ENCODE measurements at regions of chr13 and their contacts with region 1.

Region 1: GRCh38 chr13:43804461-43805070 is 17.8 kb upstream of the ENOX1 start:
- DNase-seq: peak; percentile 59
- ATAC-seq: no peak
- H3K4me3 ChIP-seq: no peak overlapping the region
- H3K4me3 Mint-ChIP-seq: no peak overlapping the region
- H3K27ac ChIP-seq: no peak overlapping the region
- H3K27ac Mint-ChIP-seq: no peak overlapping the region
- H3K4me1 ChIP-seq: no peaks in the 10 kb centered on the region
- H3K4me1 Mint-ChIP-seq: no peaks in the 10 kb centered on the region
- H3K27me3 ChIP-seq: no peaks in the 10 kb centered on the region
- H3K27me3 Mint-ChIP-seq: peaks cover 13% of the 10 kb centered on the region
- CTCF ChIP-seq: peak; percentile 85

Region 2: DNA sequence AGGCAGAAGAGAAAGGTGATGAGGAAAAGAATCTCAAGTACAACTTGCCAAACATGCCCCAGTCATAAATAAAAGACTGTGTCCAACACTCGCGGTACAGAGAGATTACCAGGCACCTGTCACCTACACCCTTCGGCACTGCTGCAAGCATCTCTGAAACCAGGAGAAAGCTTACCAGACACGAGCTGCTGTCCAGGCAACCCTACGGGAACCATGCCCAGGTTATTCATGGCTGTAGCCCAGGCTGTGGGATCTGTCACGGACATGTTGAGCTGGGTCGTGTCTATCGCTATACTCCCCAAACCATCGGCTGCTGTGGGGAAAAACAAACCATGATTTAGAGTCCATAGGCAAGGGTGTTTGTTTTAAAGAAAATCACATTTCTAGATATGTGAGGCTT is 392.8 kb before region 1 on chr13:
- CTCF ChIA-PET with region 1: no interaction called
- POLR2A ChIA-PET with region 1: no interaction called
- intact Hi-C with region 1: no loop called
- DNase-seq: no peak
- ATAC-seq: no peak
- H3K4me3 ChIP-seq: no peak overlapping the region
- H3K4me3 Mint-ChIP-seq: no peak overlapping the region
- H3K27ac ChIP-seq: no peak overlapping the region
- H3K27ac Mint-ChIP-seq: no peak overlapping the region
- H3K4me1 ChIP-seq: no peaks in the 10 kb centered on the region
- H3K4me1 Mint-ChIP-seq: no peaks in the 10 kb centered on the region
- H3K27me3 ChIP-seq: peaks cover 0 to 4% (median 0%) of the 10 kb centered on the region in 4 experiments
- H3K27me3 Mint-ChIP-seq: peaks cover 11% of the 10 kb centered on the region
- CTCF ChIP-seq: no peak

Region 3: DNA sequence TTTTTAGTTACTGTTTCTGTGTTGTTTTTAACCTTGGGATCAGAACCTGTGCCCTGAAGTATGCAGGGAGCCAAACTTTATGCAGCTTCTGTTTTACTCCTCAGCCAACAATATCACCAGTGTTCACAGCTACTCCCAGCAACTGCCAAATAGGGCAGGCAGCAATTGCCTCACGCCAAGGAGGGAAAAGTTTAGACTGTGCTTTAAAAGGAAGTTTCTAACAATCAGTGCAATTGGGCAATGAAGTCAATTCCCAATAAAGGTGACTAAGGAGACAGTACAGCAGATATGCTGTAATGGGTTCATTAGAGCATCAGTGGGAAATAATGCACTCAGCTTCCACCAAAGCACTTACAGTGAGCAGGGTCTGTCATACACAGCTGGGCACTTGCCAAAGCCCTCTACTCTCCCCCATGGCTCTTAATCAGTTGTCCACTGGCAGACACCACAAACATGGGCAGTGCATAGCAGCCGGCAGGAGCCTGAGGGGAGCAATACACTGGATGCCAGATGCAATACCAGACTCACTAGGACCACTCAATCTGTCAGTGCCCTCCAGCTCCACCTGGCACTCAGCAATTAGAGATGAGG is 37.1 kb before region 1 on chr13:
- CTCF ChIA-PET with region 1: no interaction called
- POLR2A ChIA-PET with region 1: no interaction called
- intact Hi-C with region 1: no loop called
- DNase-seq: no peak
- ATAC-seq: no peak
- H3K4me3 ChIP-seq: no peak overlapping the region
- H3K4me3 Mint-ChIP-seq: no peak overlapping the region
- H3K27ac ChIP-seq: no peak overlapping the region
- H3K27ac Mint-ChIP-seq: no peak overlapping the region
- H3K4me1 ChIP-seq: no peaks in the 10 kb centered on the region
- H3K4me1 Mint-ChIP-seq: no peaks in the 10 kb centered on the region
- H3K27me3 ChIP-seq: no peaks in the 10 kb centered on the region
- H3K27me3 Mint-ChIP-seq: peaks cover 8% of the 10 kb centered on the region
- CTCF ChIP-seq: no peak

Region 4: GRCh38 chr13:43786773-43787517 is 17.6 kb before region 1 on chr13 and contains the start of gene ENOX1:
- CTCF ChIA-PET with region 1: interaction called, 13 read pairs
- POLR2A ChIA-PET with region 1: no interaction called
- intact Hi-C with region 1: no loop called
- DNase-seq: peak; percentile 37
- ATAC-seq: no peak
- H3K4me3 ChIP-seq: peak within 1 kb of the TSS in 3 of 5 experiments; percentile 43 to 56 (median 46)
- H3K4me3 Mint-ChIP-seq: peak within 1 kb of the TSS; percentile 82
- H3K27ac ChIP-seq: no peak within 1 kb of the TSS
- H3K27ac Mint-ChIP-seq: no peak within 1 kb of the TSS
- H3K4me1 ChIP-seq: peaks cover 13 to 27% of the 10 kb centered on the region in 2 donors
- H3K4me1 Mint-ChIP-seq: peaks cover 16% of the 10 kb centered on the region
- H3K27me3 ChIP-seq: peaks cover 0 to 35% (median 22%) of the 10 kb centered on the region in 4 experiments
- H3K27me3 Mint-ChIP-seq: peaks cover 39% of the 10 kb centered on the region
- CTCF ChIP-seq: no peak
- total RNA-seq, gene ENOX1: not detected in 2 replicates

Region 5: GRCh38 chr13:43815204-43815603 is 10.6 kb after region 1 on chr13:
- CTCF ChIA-PET with region 1: interaction called, 13 read pairs
- POLR2A ChIA-PET with region 1: no interaction called
- intact Hi-C with region 1: no loop called
- DNase-seq: no peak
- ATAC-seq: no peak
- H3K4me3 ChIP-seq: no peak overlapping the region
- H3K4me3 Mint-ChIP-seq: no peak overlapping the region
- H3K27ac ChIP-seq: no peak overlapping the region
- H3K27ac Mint-ChIP-seq: no peak overlapping the region
- H3K4me1 ChIP-seq: no peaks in the 10 kb centered on the region
- H3K4me1 Mint-ChIP-seq: no peaks in the 10 kb centered on the region
- H3K27me3 ChIP-seq: no peaks in the 10 kb centered on the region
- H3K27me3 Mint-ChIP-seq: peaks cover 18% of the 10 kb centered on the region
- CTCF ChIP-seq: no peak

Measured in B cell (primary cell).